Activated CD4-positive, alpha-beta T cell treated with anti-CD3 and anti-CD28 coated beads for 36 hours (primary cell): ENCODE measurements at regions of chr7 and their contacts with region 1.

Region 1: DNA sequence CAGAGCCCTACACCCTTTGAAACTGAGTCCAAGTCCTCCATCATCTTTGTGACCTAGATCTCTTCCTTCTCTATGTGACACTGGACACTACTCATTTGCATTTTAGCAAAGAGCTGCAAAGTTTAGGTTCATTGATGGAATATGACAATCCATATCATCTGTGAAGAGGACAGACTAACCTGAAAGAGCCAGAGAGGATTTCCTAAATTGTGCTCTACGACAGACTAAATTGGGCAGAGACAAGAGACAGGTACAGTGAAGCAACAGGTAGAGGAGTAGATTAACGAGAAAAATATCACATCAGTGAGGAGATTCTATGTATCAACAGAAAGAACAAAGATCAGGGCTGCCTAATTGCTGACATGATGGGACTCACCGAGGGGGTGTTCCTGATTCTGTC is at the start of gene TAS2R3:
- DNase-seq: no peak
- ATAC-seq: no peak
- H3K4me3 Mint-ChIP-seq: no peak within 1 kb of the TSS
- H3K27ac Mint-ChIP-seq: no peak within 1 kb of the TSS
- H3K4me1 Mint-ChIP-seq: no peaks in the 10 kb centered on the region
- H3K27me3 Mint-ChIP-seq: no peaks in the 10 kb centered on the region
- total RNA-seq, gene TAS2R3: 0.69 to 1.1 TPM

Region 2: DNA sequence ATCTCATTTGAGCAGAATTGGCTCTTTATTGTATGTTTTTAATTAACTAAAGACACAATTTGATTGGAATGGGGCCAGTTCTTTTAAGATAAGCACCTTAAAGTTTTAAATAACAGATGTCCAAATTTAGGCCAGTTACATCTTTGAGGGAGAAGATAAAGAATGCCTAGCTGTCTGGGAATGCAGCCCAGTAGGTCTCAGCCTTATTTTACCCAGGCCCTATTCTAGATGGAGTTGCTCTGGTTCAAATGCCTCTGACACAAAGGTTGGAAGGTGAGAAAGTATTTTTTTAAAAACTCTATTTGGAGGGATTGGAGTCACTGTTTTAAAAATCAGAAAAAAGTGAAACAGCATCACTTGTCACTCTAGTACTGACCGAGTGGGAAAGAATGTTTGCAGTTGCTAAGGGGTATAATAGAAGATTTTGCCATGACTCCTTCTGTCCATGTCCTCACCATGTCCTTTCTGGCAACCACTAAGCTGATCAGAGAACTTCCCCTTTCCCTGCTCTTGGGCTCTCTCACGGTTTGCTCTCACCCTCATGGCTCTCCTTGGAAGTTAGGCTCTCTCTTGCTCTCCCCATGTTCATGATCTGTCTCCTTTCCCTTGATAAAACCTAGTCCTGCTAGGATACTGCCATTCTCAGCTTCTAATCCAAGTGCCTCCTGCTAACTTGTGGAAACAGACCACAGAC is 450.8 kb before region 1 on chr7:
- CTCF ChIA-PET with region 1: no interaction called
- POLR2A ChIA-PET with region 1: no interaction called
- intact Hi-C with region 1: no loop called
- DNase-seq: no peak
- ATAC-seq: no peak
- H3K4me3 Mint-ChIP-seq: no peak overlapping the region
- H3K27ac Mint-ChIP-seq: no peak overlapping the region
- H3K4me1 Mint-ChIP-seq: no peaks in the 10 kb centered on the region
- H3K27me3 Mint-ChIP-seq: peaks cover 8% of the 10 kb centered on the region

Region 3: GRCh38 chr7:141776374-141776773 is 12.6 kb after region 1 on chr7 and contains the start of gene TAS2R4:
- CTCF ChIA-PET with region 1: interaction called, 3 read pairs
- POLR2A ChIA-PET with region 1: no interaction called
- intact Hi-C with region 1: loop called in 1 of 2 experiments (anchors 1 kb)
- DNase-seq: no peak
- ATAC-seq: no peak
- H3K4me3 Mint-ChIP-seq: no peak within 1 kb of the TSS
- H3K27ac Mint-ChIP-seq: no peak within 1 kb of the TSS
- H3K4me1 Mint-ChIP-seq: peaks cover 3% of the 10 kb centered on the region
- H3K27me3 Mint-ChIP-seq: no peaks in the 10 kb centered on the region
- total RNA-seq, gene TAS2R4: 0.60 to 0.62 TPM

Region 4: GRCh38 chr7:141956084-141956483 is 192.3 kb after region 1 on chr7:
- CTCF ChIA-PET with region 1: no interaction called
- POLR2A ChIA-PET with region 1: no interaction called
- intact Hi-C with region 1: no loop called
- DNase-seq: no peak
- ATAC-seq: no peak
- H3K4me3 Mint-ChIP-seq: no peak overlapping the region
- H3K27ac Mint-ChIP-seq: no peak overlapping the region
- H3K4me1 Mint-ChIP-seq: peaks cover 3% of the 10 kb centered on the region
- H3K27me3 Mint-ChIP-seq: peaks cover 3% of the 10 kb centered on the region